ENCODE measurements at regions of chr11 and their contacts with region 1.

Region 1: DNA sequence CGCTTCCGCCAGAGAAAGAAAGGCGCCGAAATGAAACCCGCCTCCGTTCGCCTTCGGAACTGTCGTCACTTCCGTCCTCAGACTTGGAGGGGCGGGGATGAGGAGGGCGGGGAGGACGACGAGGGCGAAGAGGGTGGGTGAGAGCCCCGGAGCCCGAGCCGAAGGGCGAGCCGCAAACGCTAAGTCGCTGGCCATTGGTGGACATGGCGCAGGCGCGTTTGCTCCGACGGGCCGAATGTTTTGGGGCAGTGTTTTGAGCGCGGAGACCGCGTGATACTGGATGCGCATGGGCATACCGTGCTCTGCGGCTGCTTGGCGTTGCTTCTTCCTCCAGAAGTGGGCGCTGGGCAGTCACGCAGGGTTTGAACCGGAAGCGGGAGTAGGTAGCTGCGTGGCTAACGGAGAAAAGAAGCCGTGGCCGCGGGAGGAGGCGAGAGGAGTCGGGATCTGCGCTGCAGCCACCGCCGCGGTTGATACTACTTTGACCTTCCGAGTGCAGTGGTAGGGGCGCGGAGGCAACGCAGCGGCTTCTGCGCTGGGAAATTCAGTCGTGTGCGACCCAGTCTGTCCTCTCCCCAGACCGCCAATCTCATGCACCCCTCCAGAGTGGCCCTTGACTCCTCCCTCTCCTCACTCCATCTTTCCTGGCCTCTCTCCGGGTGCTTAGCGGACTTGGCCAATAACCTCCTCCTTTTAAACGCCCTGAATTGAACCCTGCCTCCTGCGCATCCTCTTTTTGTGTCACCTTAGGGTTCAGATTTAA is at the start of gene ATM:
- DNase-seq: peak; percentile 99
- ATAC-seq: peak; percentile 77
- H3K4me3 Mint-ChIP-seq: no peak within 1 kb of the TSS
- H3K27ac Mint-ChIP-seq: no peak within 1 kb of the TSS
- H3K4me1 Mint-ChIP-seq: peaks cover 50% of the 10 kb centered on the region
- H3K27me3 Mint-ChIP-seq: no peaks in the 10 kb centered on the region
- total RNA-seq, gene ATM: 32.8 to 36.1 TPM

Region 2: DNA sequence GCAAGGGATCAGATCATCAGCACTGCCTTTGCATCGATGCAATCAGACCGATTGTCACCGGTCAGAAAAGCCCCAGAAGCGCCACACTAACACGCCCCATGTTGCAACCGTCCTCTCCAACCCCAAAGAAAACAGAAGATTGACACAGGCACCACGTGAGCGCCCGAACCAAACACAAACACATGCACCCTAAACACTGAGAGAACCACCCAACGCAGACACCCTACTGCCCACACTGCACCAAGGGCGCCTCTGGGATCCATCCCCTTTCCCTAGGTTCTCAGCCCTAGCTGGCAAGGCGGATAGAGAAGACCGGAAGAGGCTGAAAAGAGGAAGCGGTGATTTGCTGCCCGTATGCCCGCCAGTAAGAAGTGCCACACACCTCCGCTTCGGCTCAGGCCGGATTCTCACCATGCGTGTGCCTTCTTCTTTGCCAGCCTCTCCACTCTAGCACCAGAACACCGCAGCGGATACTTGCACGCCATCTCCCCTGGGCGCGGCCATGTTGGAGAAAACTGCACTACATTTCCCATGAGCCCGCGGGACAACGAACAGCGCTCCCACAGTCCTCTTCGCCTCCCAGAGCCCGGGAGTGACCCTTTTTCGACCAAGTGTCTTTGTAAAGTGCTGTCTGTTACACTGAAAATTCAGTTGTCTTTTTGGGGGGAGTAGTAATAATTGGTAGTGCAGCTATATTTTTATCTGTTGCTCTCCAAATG is 657.5 kb before region 1 on chr11 and contains the start of gene ALKBH8:
- CTCF ChIA-PET with region 1: no interaction called
- POLR2A ChIA-PET with region 1: no interaction called
- intact Hi-C with region 1: loop called in 1 of 2 experiments (anchors 10 kb)
- DNase-seq: peak; percentile 90
- ATAC-seq: peak; percentile 92
- H3K4me3 Mint-ChIP-seq: peak within 1 kb of the TSS; percentile 93
- H3K27ac Mint-ChIP-seq: peak within 1 kb of the TSS; percentile 98
- H3K4me1 Mint-ChIP-seq: peaks cover 54% of the 10 kb centered on the region
- H3K27me3 Mint-ChIP-seq: no peaks in the 10 kb centered on the region
- total RNA-seq, gene ALKBH8: 11.4 to 12.6 TPM

Region 3: GRCh38 chr11:107957109-107957588 is 265.7 kb before region 1 on chr11:
- CTCF ChIA-PET with region 1: no interaction called
- POLR2A ChIA-PET with region 1: no interaction called
- intact Hi-C with region 1: no loop called
- DNase-seq: no peak
- ATAC-seq: no peak
- H3K4me3 Mint-ChIP-seq: no peak overlapping the region
- H3K27ac Mint-ChIP-seq: no peak overlapping the region
- H3K4me1 Mint-ChIP-seq: no peaks in the 10 kb centered on the region
- H3K27me3 Mint-ChIP-seq: peaks cover 17% of the 10 kb centered on the region

Region 4: DNA sequence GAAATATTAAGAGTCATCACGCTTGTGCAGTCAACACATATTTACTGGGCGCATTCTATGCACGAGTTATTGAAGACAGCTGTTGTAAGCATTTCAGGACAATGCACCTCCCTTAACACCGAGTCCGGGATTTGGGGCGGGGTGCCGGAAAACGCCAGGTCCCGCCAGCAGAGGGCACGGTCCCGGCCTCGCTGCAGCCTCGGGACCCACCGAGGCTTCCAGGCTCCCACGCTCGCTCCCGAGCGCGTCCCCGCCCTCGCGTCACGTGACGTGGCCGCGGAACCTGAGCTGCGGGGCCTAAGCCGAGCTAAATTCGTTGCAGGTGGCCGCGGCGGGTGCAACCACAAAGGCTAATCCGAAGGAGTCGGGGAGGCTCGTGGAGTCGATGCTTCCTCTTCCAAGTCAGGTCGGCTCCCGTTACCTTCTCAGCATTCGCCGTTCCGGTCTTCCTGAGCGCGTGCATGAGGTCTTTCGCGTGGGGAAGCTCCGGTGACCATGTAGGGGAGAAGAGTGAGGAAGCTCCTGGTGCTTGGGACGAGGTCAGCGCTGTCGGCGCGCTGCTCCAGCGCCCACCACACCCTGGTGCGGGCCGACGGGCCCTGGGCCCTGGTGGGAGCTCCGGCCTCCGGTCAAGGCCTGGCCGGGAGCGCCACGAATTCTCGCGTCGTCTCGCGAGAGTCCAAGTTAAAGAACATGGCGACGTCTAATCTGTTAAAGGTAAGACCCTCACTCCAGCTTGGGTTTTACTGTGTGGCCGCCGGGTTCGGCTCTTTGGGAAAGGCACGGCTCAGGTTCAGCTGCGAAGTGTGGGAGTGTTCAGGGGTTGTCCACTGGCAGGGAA is 214.0 kb before region 1 on chr11 and contains the start of gene CUL5:
- CTCF ChIA-PET with region 1: no interaction called
- POLR2A ChIA-PET with region 1: no interaction called
- intact Hi-C with region 1: loop called (anchors 1 to 10 kb)
- DNase-seq: peak; percentile 95
- ATAC-seq: peak; percentile 89
- H3K4me3 Mint-ChIP-seq: peak within 1 kb of the TSS; percentile 99
- H3K27ac Mint-ChIP-seq: peak within 1 kb of the TSS; percentile 95
- H3K4me1 Mint-ChIP-seq: peaks cover 16% of the 10 kb centered on the region
- H3K27me3 Mint-ChIP-seq: no peaks in the 10 kb centered on the region
- total RNA-seq, gene CUL5: 19.7 to 34.4 TPM

Region 5: DNA sequence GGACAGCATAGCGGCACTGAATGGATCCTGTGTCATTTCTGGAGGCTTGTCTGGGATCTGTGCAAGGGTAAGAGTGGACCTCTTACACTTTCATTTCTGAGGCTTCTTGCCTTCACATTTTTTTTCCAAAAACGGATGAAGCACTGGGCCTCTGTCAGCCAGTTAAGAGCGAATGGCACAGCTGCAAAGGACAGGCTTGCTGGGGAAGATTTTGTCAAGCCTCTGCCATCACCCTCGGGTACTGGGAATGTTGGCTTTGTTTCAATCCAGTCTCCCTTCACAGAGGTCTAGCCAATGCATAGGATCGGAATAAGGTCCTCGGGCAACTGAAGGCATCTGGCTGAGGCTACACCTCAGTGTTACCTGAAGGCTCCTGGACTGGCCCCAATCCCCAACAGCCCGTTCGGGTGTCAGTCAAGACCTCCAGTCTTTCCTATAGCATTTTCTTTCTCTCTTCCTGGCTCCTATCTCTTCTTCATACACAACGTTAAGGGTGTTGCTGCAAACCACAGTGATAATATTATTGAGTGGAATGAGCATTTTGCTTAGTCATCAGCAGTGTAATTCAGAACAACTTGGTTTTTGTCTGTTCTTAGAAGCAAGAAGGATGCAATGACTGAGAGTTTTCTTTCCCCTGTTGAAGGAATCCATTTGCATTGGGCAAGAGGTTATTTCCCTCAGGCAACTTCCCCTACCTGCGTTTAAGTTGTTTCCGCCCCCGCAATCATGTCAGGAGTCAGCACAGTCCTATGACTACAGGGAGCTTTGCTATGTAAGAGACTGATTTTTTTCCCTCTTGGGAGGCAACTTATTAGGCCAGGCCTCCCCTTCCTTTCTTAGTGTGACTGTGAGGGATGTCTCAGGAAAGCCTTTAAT is 23.2 kb before region 1 on chr11:
- CTCF ChIA-PET with region 1: interaction called, 7 read pairs
- POLR2A ChIA-PET with region 1: interaction called, 6 read pairs
- intact Hi-C with region 1: loop called (anchors 1 kb)
- DNase-seq: peak; percentile 91
- ATAC-seq: peak; percentile 94
- H3K4me3 Mint-ChIP-seq: no peak overlapping the region
- H3K27ac Mint-ChIP-seq: peak overlapping the region; percentile 69
- H3K4me1 Mint-ChIP-seq: peaks cover 86% of the 10 kb centered on the region
- H3K27me3 Mint-ChIP-seq: no peaks in the 10 kb centered on the region

Region 6: GRCh38 chr11:108467091-108467823 is 244.4 kb after region 1 on chr11 and contains the start of gene C11orf65:
- CTCF ChIA-PET with region 1: no interaction called
- POLR2A ChIA-PET with region 1: no interaction called
- intact Hi-C with region 1: loop called (anchors 1 kb)
- DNase-seq: peak; percentile 97
- ATAC-seq: peak; percentile 98
- H3K4me3 Mint-ChIP-seq: peak within 1 kb of the TSS; percentile 99
- H3K27ac Mint-ChIP-seq: peak within 1 kb of the TSS; percentile 98
- H3K4me1 Mint-ChIP-seq: peaks cover 12% of the 10 kb centered on the region
- H3K27me3 Mint-ChIP-seq: no peaks in the 10 kb centered on the region
- total RNA-seq, gene C11orf65: 3.4 to 3.6 TPM

Region 7: DNA sequence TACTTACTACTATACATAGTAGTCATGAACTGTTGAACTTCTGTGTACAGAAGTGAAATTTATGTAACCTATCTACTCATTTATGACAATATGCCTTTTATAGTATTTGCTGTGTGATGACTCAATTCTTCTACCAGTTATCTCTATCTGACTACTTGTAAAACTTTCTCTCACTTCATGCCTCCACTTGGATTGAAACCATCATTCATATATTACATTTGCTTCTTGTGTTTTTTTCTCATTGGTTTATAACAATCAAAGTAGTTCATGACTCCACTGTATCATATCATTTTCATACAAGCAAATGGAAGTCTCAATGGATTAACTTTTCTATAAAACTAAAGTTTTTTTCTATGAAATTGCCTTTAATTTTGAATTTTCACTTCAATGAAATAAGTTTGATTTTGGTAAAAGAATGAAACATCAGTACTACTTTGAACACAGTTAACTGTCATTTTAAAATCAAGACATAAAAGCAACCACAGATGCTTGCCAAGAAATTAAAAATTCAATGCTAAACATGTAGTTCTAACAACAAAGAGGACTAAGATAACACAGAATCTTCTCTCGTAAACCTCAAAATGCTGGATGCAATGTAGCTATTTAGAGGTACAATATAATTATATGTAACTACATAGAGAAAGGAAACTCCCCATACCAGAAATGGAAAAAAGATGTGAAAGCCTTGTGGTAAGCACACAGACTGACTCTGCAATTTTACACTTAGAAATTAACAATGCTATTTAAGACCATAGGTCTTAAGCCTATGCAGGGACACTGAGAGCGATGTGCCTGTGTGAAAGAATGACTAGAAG is 398.3 kb after region 1 on chr11:
- CTCF ChIA-PET with region 1: no interaction called
- POLR2A ChIA-PET with region 1: no interaction called
- intact Hi-C with region 1: loop called (anchors 1 to 2 kb)
- DNase-seq: no peak
- ATAC-seq: peak; percentile 89
- H3K4me3 Mint-ChIP-seq: no peak overlapping the region
- H3K27ac Mint-ChIP-seq: no peak overlapping the region
- H3K4me1 Mint-ChIP-seq: peaks cover 23% of the 10 kb centered on the region
- H3K27me3 Mint-ChIP-seq: peaks cover 28% of the 10 kb centered on the region

Region 8: GRCh38 chr11:108733479-108734116 is 510.7 kb after region 1 on chr11:
- CTCF ChIA-PET with region 1: interaction called, 3 read pairs
- POLR2A ChIA-PET with region 1: no interaction called
- intact Hi-C with region 1: loop called (anchors 1 to 5 kb)
- DNase-seq: peak; percentile 65
- ATAC-seq: peak; percentile 99
- H3K4me3 Mint-ChIP-seq: no peak overlapping the region
- H3K27ac Mint-ChIP-seq: peak overlapping the region; percentile 81
- H3K4me1 Mint-ChIP-seq: peaks cover 56% of the 10 kb centered on the region
- H3K27me3 Mint-ChIP-seq: no peaks in the 10 kb centered on the region